Mammary epithelial cell (primary cell): ENCODE measurements at regions of chr19 and their contacts with region 1.

Region 1: DNA sequence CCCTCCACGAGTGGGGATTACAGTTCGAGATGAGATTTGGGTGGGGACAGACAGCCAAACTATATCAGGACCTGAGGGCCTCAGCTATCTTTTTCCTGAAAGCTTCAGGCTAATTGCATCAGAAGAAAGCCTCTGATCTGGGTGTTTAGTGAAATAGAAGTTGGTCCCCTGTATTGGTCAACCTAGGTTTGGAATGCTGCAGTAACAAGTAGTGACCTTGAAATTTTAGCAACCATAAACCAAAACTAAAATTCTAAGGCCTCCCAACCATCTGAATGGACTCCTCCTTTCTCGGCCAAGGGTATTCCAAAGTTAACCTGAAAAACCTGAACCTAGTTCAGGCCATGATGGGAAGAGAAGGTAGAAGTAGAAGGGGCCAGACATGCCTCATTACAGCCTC is 34.9 kb upstream of the OR10H1 start:
- DNase-seq: no peak
- H3K4me3 ChIP-seq: no peak overlapping the region
- H3K27ac ChIP-seq: no peak overlapping the region
- H3K4me1 ChIP-seq: no peaks in the 10 kb centered on the region
- H3K27me3 ChIP-seq: no peaks in the 10 kb centered on the region
- CTCF ChIP-seq: no peak

Region 2: GRCh38 chr19:15418588-15419412 is 431.6 kb before region 1 on chr19 and contains the start of gene AKAP8L:
- CTCF ChIA-PET with region 1: no interaction called
- dilution Hi-C with region 1: no loop called
- in situ Hi-C with region 1: no loop called
- intact Hi-C with region 1: no loop called
- DNase-seq: peak; percentile 99
- H3K4me3 ChIP-seq: peak within 1 kb of the TSS; percentile 80 to 99 (median 92)
- H3K27ac ChIP-seq: peak within 1 kb of the TSS; percentile 60
- H3K4me1 ChIP-seq: peaks cover 23% of the 10 kb centered on the region
- H3K27me3 ChIP-seq: no peaks in the 10 kb centered on the region
- CTCF ChIP-seq: peak; percentile 51 to 77
- total RNA-seq, gene AKAP8L: 55.0 to 75.9 TPM

Region 3: DNA sequence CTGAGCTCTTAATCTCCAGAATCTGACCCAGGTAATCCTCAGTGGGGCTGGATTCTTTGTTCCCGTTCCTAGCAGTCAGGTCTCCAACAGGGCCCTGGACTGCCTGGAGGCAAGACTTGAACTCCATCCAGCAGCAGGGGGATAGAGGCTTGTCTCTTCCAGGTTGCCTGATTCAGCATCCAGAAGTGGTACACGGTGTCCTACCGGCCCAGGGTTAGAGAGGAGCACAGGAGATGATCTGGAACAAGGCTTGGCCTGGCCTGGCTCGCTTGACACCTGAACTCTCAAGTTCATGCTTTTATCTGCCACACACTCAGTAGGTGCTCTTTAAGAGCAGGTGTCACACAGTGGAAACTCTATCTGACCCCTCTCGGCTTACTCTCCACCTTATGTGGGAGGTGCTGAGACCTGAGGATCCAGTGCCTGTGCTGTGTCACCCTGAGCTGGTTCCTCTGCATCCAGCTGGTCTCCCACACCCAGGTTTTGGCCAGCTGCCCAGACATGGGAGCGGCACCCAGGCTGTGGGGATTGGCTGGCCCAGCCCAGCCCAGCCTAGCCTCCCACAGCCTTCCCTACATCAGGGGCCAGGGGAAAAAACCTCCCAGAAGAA is 210.0 kb before region 1 on chr19 and contains the start of gene CYP4F3:
- CTCF ChIA-PET with region 1: no interaction called
- dilution Hi-C with region 1: loop called (anchors 5 kb)
- in situ Hi-C with region 1: no loop called
- intact Hi-C with region 1: no loop called
- DNase-seq: peak; percentile 95
- H3K4me3 ChIP-seq: no peak within 1 kb of the TSS
- H3K27ac ChIP-seq: peak within 1 kb of the TSS; percentile 22
- H3K4me1 ChIP-seq: peaks cover 24% of the 10 kb centered on the region
- H3K27me3 ChIP-seq: no peaks in the 10 kb centered on the region
- CTCF ChIP-seq: no peak
- total RNA-seq, gene CYP4F3: under 0.01 to 0.54 TPM

Region 4: DNA sequence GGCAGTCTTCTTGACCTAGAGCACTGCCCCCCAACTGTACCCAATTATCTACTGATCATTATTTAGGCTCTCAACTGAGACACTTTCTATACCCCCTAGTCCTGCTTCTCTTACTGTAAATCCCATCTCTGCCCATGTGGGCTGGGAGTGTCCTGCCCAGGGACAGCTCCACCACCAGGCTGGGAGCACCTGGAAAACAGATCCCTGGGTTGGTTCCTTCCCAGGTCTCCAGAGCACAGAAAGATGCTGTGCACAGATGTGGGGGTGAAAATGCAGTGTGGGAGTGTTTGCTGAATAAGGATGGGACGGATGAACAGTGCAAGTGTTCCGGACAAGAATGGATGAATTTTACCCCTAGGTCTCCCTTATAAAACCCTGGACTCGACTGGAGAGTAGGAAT is 34.8 kb after region 1 on chr19:
- CTCF ChIA-PET with region 1: no interaction called
- dilution Hi-C with region 1: no loop called
- in situ Hi-C with region 1: no loop called
- intact Hi-C with region 1: no loop called
- DNase-seq: no peak
- H3K4me3 ChIP-seq: no peak overlapping the region
- H3K27ac ChIP-seq: no peak overlapping the region
- H3K4me1 ChIP-seq: no peaks in the 10 kb centered on the region
- H3K27me3 ChIP-seq: no peaks in the 10 kb centered on the region
- CTCF ChIP-seq: no peak

Region 5: DNA sequence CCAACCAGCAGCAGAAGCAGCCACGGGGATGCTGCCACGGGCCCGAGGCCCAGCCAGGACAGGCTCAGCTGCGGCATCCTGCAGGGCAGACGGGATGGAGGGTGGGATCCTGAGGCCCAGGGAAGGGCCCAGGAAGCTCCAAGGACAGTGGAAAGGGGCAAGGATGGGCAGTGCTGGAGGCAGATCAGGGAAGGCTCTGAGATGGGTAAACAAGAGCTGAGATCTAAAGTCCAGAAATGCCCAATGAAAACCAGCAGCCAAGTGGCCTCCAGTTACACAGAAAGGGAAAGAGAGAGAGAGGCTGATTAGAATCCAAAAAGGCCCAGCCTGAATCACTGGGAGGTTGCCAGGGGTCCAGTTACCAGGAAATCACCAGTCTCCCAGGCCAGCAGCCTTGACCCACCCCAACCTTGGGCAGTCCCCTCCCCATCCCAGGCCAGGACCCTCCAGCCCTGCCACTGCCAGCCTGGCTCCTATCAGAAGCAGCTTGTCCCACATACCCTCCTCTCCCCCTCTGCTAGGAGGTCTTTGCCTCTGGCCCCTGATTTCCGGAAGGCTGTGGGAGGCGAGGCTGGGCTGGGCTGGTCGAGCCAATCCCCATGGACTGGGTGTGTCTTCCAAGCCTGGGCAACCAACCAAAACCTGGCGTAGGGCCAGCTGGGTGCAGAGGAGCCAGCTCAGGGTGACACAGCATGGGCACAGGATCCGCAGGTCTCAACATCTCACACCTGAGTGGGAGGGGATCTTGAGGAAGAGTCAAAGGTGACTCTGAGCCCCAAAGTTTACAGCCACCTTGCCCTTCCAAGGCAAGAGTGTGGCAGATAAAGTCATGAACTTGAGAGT is 84.2 kb after region 1 on chr19 and contains the start of gene CYP4F11:
- CTCF ChIA-PET with region 1: no interaction called
- dilution Hi-C with region 1: loop called (anchors 5 kb)
- in situ Hi-C with region 1: no loop called
- intact Hi-C with region 1: no loop called
- DNase-seq: peak; percentile 84
- H3K4me3 ChIP-seq: peak within 1 kb of the TSS; percentile 20 to 29 (median 22)
- H3K27ac ChIP-seq: peak within 1 kb of the TSS; percentile 43
- H3K4me1 ChIP-seq: peaks cover 15% of the 10 kb centered on the region
- H3K27me3 ChIP-seq: no peaks in the 10 kb centered on the region
- CTCF ChIP-seq: no peak
- total RNA-seq, gene CYP4F11: 9.2 to 25.6 TPM